OCI-LY7 (cell line): ENCODE measurements at regions of chr6 and their contacts with region 1.

Region 1: GRCh38 chr6:158869826-158870648 is 50.9 kb upstream of the EZR start:
- DNase-seq: peak; percentile 99
- H3K4me3 ChIP-seq: peak overlapping the region; percentile 64
- H3K27ac ChIP-seq: peak overlapping the region; percentile 96
- H3K4me1 ChIP-seq: peaks cover 71% of the 10 kb centered on the region
- CTCF ChIP-seq: 0 out of 2 replicates have a peak, but pooled peaks have one; percentile 31

Region 2: DNA sequence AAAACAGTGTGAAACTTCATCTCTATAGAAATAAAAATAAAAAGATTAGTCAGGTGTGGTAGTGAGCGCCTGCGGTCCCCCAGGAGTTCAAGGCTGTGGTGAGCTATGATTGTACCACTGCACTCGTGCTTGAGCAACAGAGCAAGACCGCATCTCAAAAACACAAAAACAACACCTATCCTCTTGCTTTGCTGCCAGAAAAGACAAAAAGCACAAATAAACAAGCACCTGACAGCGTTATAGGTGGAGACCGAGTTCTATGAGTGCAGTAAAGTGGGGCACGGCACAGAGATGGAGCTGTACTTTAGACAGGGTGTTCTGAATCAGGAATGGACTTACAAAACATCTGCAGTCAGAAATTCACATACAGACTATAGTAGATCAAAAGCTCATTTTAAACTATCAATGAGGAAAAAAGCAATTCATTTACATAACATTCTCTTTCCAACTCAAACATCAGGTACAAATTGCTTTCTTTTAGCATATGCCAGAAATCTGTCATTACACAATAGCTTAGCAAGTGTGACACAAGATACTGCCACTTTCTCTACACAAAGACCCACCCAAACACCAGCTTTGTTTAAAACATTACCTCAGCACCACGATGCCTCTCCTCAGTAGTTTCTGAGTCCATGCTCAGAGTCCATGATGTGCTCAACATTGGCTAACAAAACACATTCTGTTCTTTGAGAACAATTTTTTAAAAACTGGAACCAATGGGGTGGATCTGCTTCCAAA is 60.9 kb before region 1 on chr6:
- CTCF ChIA-PET with region 1: interaction called, 7 read pairs
- POLR2A ChIA-PET with region 1: interaction called, 76 read pairs
- intact Hi-C with region 1: loop called (anchors 2 kb)
- DNase-seq: peak; percentile 97
- H3K4me3 ChIP-seq: peak overlapping the region; percentile 87
- H3K27ac ChIP-seq: peak overlapping the region; percentile 100
- H3K4me1 ChIP-seq: peaks cover 95% of the 10 kb centered on the region
- CTCF ChIP-seq: no peak; the same call in 1 of the 2 replicates

Region 3: DNA sequence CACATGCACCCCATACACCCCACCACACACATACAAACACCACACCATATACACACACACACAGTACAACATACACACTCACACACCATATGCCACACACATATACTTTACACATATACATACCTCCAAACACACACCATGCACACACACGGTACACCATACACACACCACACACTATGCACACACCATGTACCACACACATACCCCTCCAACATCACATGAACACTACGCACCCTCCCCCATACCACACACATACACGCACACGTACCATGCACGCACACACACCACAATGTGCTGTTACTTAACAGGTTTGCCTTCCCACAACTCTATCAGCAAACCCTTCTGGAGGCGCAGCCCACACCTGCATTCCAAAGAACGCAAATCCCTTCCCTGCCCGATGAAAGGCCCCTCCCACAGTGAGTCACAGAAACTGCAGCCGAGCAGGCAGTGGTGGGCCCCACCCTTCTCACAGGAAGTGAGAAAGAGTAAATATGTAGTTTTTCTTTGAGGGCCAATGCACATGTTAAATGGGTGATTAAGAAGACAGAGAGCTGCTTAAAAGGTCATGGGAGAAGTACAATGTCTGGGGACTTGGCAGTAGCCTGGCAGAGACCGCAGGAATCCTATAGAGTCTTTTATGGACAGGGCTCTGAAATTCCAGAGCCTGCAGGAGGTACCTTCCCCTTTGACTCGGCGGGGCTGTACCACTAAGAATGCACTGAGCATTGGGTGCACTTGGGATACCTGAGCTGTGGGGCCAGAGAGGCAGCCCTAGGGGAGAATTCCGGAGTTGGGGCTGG is 16.8 kb before region 1 on chr6:
- CTCF ChIA-PET with region 1: no interaction called
- POLR2A ChIA-PET with region 1: interaction called, 60 read pairs
- intact Hi-C with region 1: no loop called
- DNase-seq: peak; percentile 85
- H3K4me3 ChIP-seq: peak overlapping the region; percentile 55
- H3K27ac ChIP-seq: peak overlapping the region; percentile 74
- H3K4me1 ChIP-seq: peaks cover 78% of the 10 kb centered on the region
- CTCF ChIP-seq: no peak

Region 4: DNA sequence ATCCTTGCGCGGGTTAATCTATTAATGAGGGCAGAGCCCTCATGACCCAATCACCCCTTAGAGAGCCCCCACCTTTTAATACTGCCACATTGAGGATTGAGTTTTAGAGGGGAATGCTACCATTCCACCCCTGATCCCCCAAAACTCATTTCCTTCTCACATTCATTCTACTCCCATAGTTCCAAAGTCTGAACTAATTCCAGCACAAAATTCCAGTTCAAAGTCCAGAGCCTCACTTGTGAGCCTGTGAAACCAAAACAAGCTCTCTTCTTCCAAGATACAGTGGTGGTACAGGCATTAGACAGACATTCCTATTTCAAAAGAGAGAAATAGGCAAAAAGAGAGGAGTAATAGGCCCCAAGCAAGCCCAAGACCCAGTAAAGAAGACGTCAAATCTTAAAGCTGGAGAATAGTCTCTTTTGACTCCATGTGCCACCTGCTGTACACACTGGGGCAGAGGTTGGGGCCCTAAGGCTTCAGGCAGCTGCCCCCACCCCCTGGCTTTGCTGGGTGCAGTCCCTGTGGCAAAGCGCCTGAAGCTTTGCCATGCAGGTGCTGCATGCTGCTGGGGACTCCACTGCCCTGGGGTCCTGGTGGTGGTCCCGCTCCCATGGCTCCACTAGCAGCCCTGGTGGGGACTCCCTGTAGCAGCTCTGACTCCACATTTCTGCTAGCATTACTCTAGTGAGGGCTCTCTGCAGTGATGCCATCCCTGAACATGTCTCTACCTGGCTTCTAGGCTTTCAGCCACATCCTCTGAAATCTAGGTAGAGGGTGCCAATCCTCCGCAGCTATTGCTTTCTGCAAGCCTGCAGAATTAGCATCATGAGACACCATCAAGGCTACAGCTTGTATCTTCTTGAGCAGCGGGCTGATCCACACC is 88.7 kb after region 1 on chr6:
- CTCF ChIA-PET with region 1: no interaction called
- POLR2A ChIA-PET with region 1: interaction called, 6 read pairs
- intact Hi-C with region 1: loop called (anchors 5 kb)
- DNase-seq: peak; percentile 69
- H3K4me3 ChIP-seq: no peak overlapping the region
- H3K27ac ChIP-seq: no peak overlapping the region
- H3K4me1 ChIP-seq: peaks cover 26% of the 10 kb centered on the region
- CTCF ChIP-seq: peak; percentile 77

Region 5: DNA sequence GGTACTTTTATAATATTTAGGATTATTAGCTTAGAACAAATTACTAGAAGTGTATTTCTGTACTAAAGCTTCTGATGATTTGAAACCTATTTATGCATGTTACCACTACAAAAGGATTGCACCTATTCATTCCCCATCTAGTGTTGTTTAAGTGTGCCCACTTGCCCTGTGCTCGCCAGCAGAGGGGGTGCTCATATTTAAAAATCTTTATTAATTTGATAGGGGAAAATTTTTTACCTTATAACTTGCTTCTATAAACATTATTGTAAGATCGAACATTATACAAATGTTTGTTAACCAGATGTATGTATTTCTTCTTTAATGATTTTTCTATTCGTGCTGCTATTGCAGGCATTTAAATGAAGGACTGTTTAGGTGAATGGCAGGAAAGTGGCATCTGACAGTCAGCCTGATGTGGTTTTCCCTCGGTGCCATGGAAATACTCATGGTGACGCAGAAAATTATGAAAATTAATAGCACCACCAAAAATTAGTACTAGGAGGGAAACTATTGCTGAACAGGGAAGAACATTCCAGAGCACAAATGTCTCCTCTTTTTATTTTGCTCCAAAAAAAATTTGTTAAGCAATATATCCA is 255.1 kb after region 1 on chr6:
- CTCF ChIA-PET with region 1: no interaction called
- POLR2A ChIA-PET with region 1: no interaction called
- intact Hi-C with region 1: loop called (anchors 5 kb)
- DNase-seq: peak; percentile 52
- H3K4me3 ChIP-seq: no peak overlapping the region
- H3K27ac ChIP-seq: peak overlapping the region; percentile 89
- H3K4me1 ChIP-seq: peaks cover 72% of the 10 kb centered on the region
- CTCF ChIP-seq: peak; percentile 95